Left ventricle myocardium inferior (tissue), 1 donor: ENCODE measurements at regions of chr10 and their contacts with region 1.

Region 1: DNA sequence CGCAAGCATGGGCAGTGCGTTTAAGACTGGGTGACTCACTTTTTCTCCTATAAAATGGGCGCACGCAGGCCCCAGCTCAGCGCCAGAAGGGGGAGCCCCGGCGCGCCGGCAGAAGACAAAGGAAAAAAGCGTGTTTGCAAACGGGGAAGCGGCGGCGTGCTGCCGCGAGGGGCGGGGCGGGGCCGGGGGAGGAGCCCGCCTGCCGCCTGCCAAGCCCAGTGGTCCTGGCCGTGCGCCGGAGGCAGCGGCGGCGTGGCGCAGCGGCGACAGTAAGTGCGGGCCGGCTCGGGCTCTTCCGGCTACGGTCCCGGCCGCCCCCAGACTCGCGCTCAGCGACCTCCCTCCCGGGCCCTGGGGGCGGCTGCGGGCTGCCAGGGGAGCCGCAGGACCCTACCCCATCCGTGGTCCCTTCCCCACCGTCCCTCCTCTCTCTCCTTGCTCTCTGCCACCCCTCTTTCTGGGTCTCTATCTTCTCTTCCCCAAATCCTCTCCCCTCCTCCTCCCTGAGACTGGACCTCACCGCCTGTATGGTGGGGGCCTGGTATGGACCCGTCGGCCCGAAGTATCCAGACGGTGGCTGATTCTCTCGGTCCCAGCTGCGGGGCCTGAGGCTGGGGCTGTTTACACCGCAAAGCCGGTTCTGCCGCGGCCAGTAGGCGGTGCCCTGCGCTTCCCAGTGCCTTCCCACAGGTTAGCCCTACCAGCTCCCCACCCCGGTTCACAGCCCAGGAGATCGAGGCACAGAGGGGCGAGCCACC is at the start of gene SLC29A3:
- DNase-seq: peak; percentile 83
- H3K4me3 ChIP-seq: peak within 1 kb of the TSS; percentile 86
- H3K27ac ChIP-seq: peak within 1 kb of the TSS; percentile 80
- H3K4me1 ChIP-seq: peaks cover 28% of the 10 kb centered on the region
- H3K27me3 ChIP-seq: no peaks in the 10 kb centered on the region
- CTCF ChIP-seq: peak; percentile 69
- total RNA-seq, gene SLC29A3: 1.7 TPM

Region 2: DNA sequence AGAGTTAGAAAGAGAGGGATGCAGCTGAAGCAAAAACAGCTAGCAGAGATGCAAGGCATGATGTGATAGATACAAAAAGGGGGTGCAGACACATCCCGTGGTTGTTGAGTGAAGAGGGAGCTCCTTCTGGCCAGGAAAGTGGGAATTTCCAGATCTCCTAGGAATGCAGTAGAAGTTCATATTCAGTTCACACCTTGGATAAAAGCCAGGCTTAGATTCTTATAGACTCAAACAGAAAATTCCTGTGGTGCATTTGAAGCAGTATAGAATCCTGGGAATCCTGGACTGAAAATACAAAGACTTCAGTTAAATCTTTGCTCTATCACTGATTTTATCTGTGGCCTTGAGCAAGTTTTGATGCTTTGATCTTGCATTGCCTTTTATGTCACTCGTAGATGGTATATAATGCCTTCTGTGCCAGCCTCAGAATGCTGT is 469.6 kb before region 1 on chr10:
- intact Hi-C with region 1: no loop called
- DNase-seq: no peak
- H3K4me3 ChIP-seq: no peak overlapping the region
- H3K27ac ChIP-seq: no peak overlapping the region
- H3K4me1 ChIP-seq: peaks cover 18% of the 10 kb centered on the region
- H3K27me3 ChIP-seq: no peaks in the 10 kb centered on the region
- CTCF ChIP-seq: no peak

Region 3: DNA sequence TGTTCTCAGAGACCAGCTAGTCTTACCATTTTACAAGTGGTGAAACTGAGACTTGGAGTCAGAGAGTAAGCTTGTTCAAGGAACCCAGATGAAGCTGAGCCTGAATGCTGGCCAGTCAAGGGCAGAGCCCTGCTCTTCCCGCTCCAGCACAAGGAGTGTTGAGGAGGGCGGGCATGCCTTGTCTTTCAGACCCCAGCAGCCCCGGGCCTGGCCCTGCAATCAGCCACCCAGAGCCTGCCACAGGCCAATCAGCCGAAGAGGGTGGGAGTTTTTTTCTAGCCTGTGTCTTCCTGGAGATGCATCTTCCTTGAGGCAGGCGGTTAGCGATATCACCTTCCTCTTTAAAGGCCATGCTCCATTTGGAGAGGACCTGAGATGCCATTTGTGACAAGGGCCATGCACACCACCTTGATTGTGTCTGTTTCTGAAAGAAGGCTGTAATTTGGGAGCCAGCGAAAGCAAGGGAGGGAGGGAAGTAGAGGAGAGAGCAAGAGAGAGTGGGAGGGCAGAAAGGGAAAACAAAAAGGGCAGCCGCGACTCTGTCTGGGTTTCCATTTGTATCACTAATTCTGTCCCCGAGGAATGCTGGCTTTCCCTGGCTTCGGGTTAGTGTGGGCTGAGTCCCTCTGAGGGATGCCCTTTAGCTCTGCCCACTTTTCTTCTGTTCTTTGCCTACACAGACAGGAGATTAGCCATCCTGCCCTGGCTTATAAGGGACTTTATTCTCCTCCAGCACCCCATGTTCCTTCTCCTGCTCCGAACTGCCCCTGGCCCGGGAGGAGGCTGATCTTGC is 85.5 kb after region 1 on chr10:
- intact Hi-C with region 1: no loop called
- DNase-seq: no peak
- H3K4me3 ChIP-seq: no peak overlapping the region
- H3K27ac ChIP-seq: no peak overlapping the region
- H3K4me1 ChIP-seq: no peaks in the 10 kb centered on the region
- H3K27me3 ChIP-seq: peaks cover 20% of the 10 kb centered on the region
- CTCF ChIP-seq: no peak

Region 4: DNA sequence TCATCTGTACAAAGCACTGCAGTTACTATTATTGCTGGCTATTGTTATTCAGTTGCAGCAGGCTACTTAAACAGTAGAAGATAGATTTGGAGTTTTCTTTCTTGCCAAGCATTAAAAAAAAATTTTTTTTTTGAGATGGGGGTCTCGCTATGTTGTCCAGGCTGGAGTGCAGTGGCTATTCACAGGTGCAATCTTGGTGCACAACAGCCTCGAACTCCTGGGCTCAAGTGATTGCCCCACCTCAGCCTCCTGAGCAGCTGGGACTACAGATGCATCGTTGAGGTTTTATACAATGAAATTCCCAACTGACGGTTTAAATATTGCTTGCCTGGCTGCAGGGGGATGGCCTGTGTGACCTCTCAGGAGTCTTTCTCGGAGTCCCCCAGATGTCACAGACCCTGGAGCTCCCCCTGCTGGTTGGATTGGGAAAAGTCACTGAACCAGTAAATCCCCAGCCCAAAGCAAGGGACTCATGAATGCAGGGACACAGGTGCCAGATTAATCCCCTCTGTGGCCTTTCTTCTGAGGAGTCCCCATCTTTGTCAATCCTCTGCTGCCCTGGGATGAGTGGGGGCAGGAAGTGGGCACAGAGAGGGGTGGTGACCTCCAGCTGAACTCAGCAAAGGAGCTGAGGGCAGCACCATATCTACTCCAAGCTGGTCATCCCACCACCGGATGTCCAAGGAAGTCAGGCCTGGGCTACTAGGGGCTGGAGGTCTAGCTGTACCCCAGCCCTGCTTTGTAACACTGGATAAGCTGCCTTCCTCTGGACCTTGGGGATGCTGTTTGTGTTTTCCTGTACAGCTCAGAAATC is 250.8 kb after region 1 on chr10:
- intact Hi-C with region 1: loop called (anchors 10 kb)
- DNase-seq: peak; percentile 66
- H3K4me3 ChIP-seq: no peak overlapping the region
- H3K27ac ChIP-seq: no peak overlapping the region
- H3K4me1 ChIP-seq: peaks cover 1% of the 10 kb centered on the region
- H3K27me3 ChIP-seq: no peaks in the 10 kb centered on the region
- CTCF ChIP-seq: peak; percentile 88

Region 5: DNA sequence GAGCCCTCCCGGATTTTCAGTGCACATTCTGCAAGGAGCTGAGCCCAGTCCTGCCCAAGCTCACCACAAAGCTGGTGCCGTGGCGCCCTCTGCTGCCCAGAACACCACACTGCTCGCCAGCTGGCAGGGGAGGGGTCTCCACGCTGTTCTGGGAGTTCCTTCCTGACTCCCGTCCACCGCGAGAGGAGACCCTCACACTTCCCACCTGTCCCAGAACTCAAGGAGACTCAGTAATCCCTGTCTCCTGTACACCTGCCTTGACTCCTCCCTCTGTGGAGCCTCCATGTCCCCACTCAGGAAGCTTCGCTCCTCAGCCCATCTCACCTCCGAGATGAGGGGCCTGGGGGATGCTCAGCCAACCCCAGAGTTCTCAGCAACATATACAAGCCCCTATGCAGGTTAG is 389.1 kb after region 1 on chr10:
- intact Hi-C with region 1: loop called (anchors 10 kb)
- DNase-seq: peak; percentile 58
- H3K4me3 ChIP-seq: no peak overlapping the region
- H3K27ac ChIP-seq: no peak overlapping the region
- H3K4me1 ChIP-seq: peaks cover 34% of the 10 kb centered on the region
- H3K27me3 ChIP-seq: no peaks in the 10 kb centered on the region
- CTCF ChIP-seq: peak; percentile 91